Activated naive CD4-positive, alpha-beta T cell treated with anti-CD3 and anti-CD28 coated beads for 36 hours (primary cell): ENCODE measurements at regions of chr19 and their contacts with region 1.

Region 1: DNA sequence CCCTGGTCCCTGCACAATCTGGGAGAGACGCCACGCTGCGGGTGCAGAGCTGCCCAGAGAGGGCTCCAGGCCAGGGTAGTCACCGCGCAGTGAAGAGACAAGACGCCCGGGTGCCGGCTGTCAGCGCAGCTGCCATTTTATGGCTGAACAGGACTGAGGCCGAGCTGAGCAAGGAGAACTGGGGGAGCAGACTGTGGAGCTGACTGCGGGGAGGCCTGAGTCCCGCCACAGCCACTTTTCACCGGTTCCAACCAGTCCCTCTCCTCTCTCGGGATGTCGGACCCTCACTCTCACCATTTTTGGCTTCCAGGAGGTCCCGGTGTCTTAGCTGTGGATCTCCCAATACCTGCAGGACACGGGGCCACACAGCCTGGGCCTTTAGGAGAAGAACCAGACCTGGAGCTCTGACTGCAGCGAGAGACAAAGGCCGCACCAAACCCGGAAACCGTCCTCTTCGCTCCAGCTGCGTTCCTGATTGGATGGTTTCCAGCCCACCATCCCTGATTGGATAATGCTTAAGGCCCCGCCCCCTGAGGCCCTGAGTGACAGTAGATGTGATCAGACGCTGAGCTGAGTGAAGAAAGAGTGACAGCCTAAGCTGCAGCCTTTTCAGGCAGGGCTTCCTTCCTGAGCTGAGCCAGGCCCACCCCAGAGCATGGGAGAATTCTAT is at the start of gene ZNF626:
- DNase-seq: peak; percentile 97
- H3K4me3 Mint-ChIP-seq: peak within 1 kb of the TSS; percentile 93
- H3K27ac Mint-ChIP-seq: peak within 1 kb of the TSS; percentile 91
- H3K4me1 Mint-ChIP-seq: peaks cover 20% of the 10 kb centered on the region
- H3K27me3 Mint-ChIP-seq: no peaks in the 10 kb centered on the region
- total RNA-seq, gene ZNF626: 8.2 to 9.8 TPM

Region 2: GRCh38 chr19:20776083-20777076 is 115.1 kb after region 1 on chr19 and contains the start of gene ZNF66:
- CTCF ChIA-PET with region 1: no interaction called
- intact Hi-C with region 1: loop called (anchors 1 kb)
- DNase-seq: peak; percentile 98
- H3K4me3 Mint-ChIP-seq: peak within 1 kb of the TSS; percentile 100
- H3K27ac Mint-ChIP-seq: peak within 1 kb of the TSS; percentile 95
- H3K4me1 Mint-ChIP-seq: peaks cover 18% of the 10 kb centered on the region
- H3K27me3 Mint-ChIP-seq: no peaks in the 10 kb centered on the region
- total RNA-seq, gene ZNF66: 3.9 to 4.9 TPM

Region 3: GRCh38 chr19:21835810-21836444 is 1174.6 kb after region 1 on chr19 and contains the start of gene ZNF43:
- CTCF ChIA-PET with region 1: no interaction called
- intact Hi-C with region 1: loop called (anchors 5 kb)
- DNase-seq: peak; percentile 97
- H3K4me3 Mint-ChIP-seq: peak within 1 kb of the TSS; percentile 98
- H3K27ac Mint-ChIP-seq: peak within 1 kb of the TSS; percentile 99
- H3K4me1 Mint-ChIP-seq: peaks cover 37% of the 10 kb centered on the region
- H3K27me3 Mint-ChIP-seq: no peaks in the 10 kb centered on the region
- total RNA-seq, gene ZNF43: 25.8 to 27.8 TPM